CD4-positive, alpha-beta T cell (primary cell): ENCODE measurements at regions of chr12 and their contacts with region 1.

Region 1: DNA sequence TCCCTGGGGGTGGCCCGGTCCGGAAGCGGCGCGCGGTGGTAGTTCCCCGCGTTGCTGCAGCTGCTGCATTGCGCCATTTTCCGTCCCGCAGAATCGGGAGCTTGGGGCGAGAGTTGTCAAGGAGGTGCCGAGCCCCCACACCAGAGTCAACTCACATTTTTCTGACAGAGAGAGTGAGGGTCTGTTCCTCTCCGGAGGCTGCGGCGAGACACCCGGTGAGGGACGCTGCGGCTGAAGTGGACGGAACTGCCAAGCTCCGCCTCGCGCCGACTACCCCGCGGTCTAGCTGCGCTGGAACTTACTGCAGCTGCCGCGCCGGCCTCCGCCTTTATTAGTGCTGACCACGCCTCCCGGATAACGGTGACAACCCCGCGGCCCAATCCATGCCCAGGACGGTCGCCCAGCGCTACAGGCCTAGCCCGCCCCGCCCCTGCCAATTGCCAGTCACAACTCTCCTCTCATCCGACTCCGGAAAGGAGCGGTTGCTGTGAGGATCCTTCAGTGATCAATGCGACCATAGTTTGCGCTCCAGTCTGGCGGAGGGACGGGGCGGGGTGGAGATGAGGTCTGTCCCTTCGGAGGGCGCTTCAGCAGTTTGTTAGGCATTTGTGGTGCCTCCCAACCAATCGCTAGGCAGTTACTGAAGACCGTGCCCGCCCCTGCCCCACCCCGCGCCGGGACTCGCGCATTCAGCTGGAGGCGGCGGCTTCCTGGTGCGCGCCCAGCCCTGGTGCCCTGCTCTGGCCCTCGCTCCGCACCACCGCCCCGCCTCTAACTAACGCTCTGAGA is at the start of gene VAMP1:
- DNase-seq: peak; percentile 95 to 99 (median 97)
- ATAC-seq: peak; percentile 87
- H3K4me3 ChIP-seq: peak within 1 kb of the TSS; percentile 94
- H3K4me3 Mint-ChIP-seq: peak within 1 kb of the TSS; percentile 94
- H3K27ac ChIP-seq: peak within 1 kb of the TSS; percentile 72 to 73
- H3K27ac Mint-ChIP-seq: peak within 1 kb of the TSS; percentile 92
- H3K4me1 ChIP-seq: peaks cover 50% of the 10 kb centered on the region
- H3K4me1 Mint-ChIP-seq: peaks cover 63% of the 10 kb centered on the region
- H3K27me3 ChIP-seq: no peaks in the 10 kb centered on the region
- H3K27me3 Mint-ChIP-seq: no peaks in the 10 kb centered on the region
- CTCF ChIP-seq: no peak
- total RNA-seq, gene VAMP1: 84.8 to 87.7 TPM

Region 2: DNA sequence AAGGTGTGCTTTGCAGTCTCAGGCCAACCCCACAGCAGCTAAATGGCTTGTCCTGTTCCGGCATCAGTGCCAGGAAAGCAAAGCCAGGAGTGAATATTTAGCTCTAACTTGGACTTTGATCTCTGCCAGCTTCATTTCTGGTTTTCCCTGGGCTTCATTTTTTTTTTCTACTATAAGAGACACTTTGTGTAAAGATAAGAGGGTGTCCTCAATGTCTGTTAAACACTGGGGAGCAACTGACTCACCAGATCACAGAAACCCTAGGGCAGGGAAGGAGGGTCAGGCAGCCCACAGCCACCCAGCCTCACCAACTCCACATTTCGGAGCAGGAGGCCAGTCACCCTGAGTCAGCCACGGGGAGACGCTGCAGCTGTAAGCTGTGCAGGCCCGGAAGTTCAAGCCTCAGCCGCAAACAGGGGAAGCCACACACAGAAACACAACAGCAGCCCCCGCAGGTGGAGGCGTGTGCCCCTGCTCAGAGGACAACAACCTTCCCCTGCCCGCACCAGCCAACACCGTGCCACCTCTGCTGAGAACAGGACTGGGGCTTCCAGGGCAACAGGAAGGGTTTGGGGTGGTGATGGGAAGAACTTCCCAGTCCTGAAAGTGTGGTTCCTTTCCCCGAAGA is 135.0 kb before region 1 on chr12:
- CTCF ChIA-PET with region 1: interaction called, 19 read pairs
- POLR2A ChIA-PET with region 1: interaction called, 26 read pairs
- intact Hi-C with region 1: loop called (anchors 1 to 2 kb)
- DNase-seq: peak; percentile 68 to 92 (median 82)
- ATAC-seq: peak; percentile 77
- H3K4me3 ChIP-seq: peak overlapping the region; percentile 100
- H3K4me3 Mint-ChIP-seq: no peak overlapping the region
- H3K27ac ChIP-seq: peak overlapping the region; percentile 80 to 90
- H3K27ac Mint-ChIP-seq: no peak overlapping the region
- H3K4me1 ChIP-seq: peaks cover 86% of the 10 kb centered on the region
- H3K4me1 Mint-ChIP-seq: peaks cover 8% of the 10 kb centered on the region
- H3K27me3 ChIP-seq: no peaks in the 10 kb centered on the region
- H3K27me3 Mint-ChIP-seq: no peaks in the 10 kb centered on the region
- CTCF ChIP-seq: peak; percentile 76

Region 3: GRCh38 chr12:6430124-6430989 is 40.2 kb before region 1 on chr12:
- CTCF ChIA-PET with region 1: interaction called, 61 read pairs
- POLR2A ChIA-PET with region 1: interaction called, 99 read pairs
- intact Hi-C with region 1: no loop called
- DNase-seq: peak in 3 of 14 experiments; percentile 34 to 48 (median 43)
- ATAC-seq: no peak
- H3K4me3 ChIP-seq: peak overlapping the region; percentile 3
- H3K4me3 Mint-ChIP-seq: no peak overlapping the region
- H3K27ac ChIP-seq: no peak overlapping the region
- H3K27ac Mint-ChIP-seq: peak overlapping the region; percentile 56
- H3K4me1 ChIP-seq: peaks cover 62% of the 10 kb centered on the region
- H3K4me1 Mint-ChIP-seq: peaks cover 70% of the 10 kb centered on the region
- H3K27me3 ChIP-seq: no peaks in the 10 kb centered on the region
- H3K27me3 Mint-ChIP-seq: no peaks in the 10 kb centered on the region
- CTCF ChIP-seq: no peak

Region 4: GRCh38 chr12:6451348-6452244 is 19.0 kb before region 1 on chr12 and contains the start of gene TAPBPL:
- CTCF ChIA-PET with region 1: interaction called, 18 read pairs
- POLR2A ChIA-PET with region 1: interaction called, 225 read pairs
- intact Hi-C with region 1: loop called in 1 of 2 experiments (anchors 2 kb)
- DNase-seq: peak; percentile 61 to 95 (median 74)
- ATAC-seq: peak; percentile 92
- H3K4me3 ChIP-seq: peak within 1 kb of the TSS; percentile 97
- H3K4me3 Mint-ChIP-seq: peak within 1 kb of the TSS; percentile 94
- H3K27ac ChIP-seq: peak within 1 kb of the TSS; percentile 96 to 99
- H3K27ac Mint-ChIP-seq: peak within 1 kb of the TSS; percentile 98
- H3K4me1 ChIP-seq: peaks cover 71% of the 10 kb centered on the region
- H3K4me1 Mint-ChIP-seq: peaks cover 77% of the 10 kb centered on the region
- H3K27me3 ChIP-seq: no peaks in the 10 kb centered on the region
- H3K27me3 Mint-ChIP-seq: no peaks in the 10 kb centered on the region
- CTCF ChIP-seq: no peak
- total RNA-seq, gene TAPBPL: 14.7 to 15.8 TPM

Region 5: GRCh38 chr12:6533923-6534694 is 63.5 kb after region 1 on chr12 and contains the start of gene GAPDH:
- CTCF ChIA-PET with region 1: interaction called, 31 read pairs
- POLR2A ChIA-PET with region 1: interaction called, 58 read pairs
- intact Hi-C with region 1: loop called (anchors 1 to 2 kb)
- DNase-seq: peak in 12 of 14 experiments; percentile 69 to 93 (median 81)
- ATAC-seq: peak; percentile 6
- H3K4me3 ChIP-seq: peak within 1 kb of the TSS; percentile 88
- H3K4me3 Mint-ChIP-seq: peak within 1 kb of the TSS; percentile 96
- H3K27ac ChIP-seq: peak within 1 kb of the TSS; percentile 91 to 93
- H3K27ac Mint-ChIP-seq: peak within 1 kb of the TSS; percentile 90
- H3K4me1 ChIP-seq: peaks cover 64% of the 10 kb centered on the region
- H3K4me1 Mint-ChIP-seq: peaks cover 53% of the 10 kb centered on the region
- H3K27me3 ChIP-seq: no peaks in the 10 kb centered on the region
- H3K27me3 Mint-ChIP-seq: no peaks in the 10 kb centered on the region
- CTCF ChIP-seq: no peak
- total RNA-seq, gene GAPDH: 498 to 508 TPM

Region 6: GRCh38 chr12:6570264-6570887 is 99.8 kb after region 1 on chr12:
- CTCF ChIA-PET with region 1: interaction called, 3 read pairs
- POLR2A ChIA-PET with region 1: interaction called, 15 read pairs
- intact Hi-C with region 1: no loop called
- DNase-seq: peak in 9 of 14 experiments; percentile 23 to 71 (median 44)
- ATAC-seq: no peak
- H3K4me3 ChIP-seq: no peak overlapping the region
- H3K4me3 Mint-ChIP-seq: peak overlapping the region; percentile 100
- H3K27ac ChIP-seq: no peak overlapping the region
- H3K27ac Mint-ChIP-seq: peak overlapping the region; percentile 98
- H3K4me1 ChIP-seq: peaks cover 41% of the 10 kb centered on the region
- H3K4me1 Mint-ChIP-seq: peaks cover 45% of the 10 kb centered on the region
- H3K27me3 ChIP-seq: no peaks in the 10 kb centered on the region
- H3K27me3 Mint-ChIP-seq: no peaks in the 10 kb centered on the region
- CTCF ChIP-seq: peak; percentile 42

Region 7: DNA sequence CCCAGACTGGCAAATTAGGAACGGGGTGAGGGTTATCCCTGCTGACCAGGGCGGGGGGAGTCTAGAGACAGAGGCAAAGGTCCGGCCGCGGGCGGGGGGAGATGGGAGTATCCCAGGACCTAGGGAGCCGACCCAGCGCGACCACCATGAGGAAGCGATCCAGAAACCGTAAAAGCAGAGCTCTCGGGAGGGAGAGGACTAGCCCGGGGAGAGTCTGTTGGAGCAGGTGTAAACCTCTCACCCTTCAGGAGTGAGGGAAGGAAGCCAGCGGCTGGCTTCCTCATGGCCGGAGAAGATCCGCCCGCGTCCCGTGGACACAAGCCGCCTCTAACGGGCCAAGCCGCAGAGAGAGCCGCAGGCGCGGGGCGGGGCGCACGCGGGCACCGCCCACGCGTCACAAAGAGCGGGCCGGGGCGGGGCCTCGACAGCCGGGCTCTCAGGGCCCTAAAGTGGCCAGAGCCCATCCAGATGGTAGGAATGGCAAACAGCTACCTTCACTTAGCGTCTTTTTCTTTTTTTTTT is 176.6 kb after region 1 on chr12 and contains the start of gene ACRBP:
- CTCF ChIA-PET with region 1: no interaction called
- POLR2A ChIA-PET with region 1: no interaction called
- intact Hi-C with region 1: no loop called
- DNase-seq: peak in 7 of 14 experiments; percentile 15 to 69 (median 38)
- ATAC-seq: peak; percentile 84
- H3K4me3 ChIP-seq: peak within 1 kb of the TSS; percentile 46
- H3K4me3 Mint-ChIP-seq: peak within 1 kb of the TSS; percentile 69
- H3K27ac ChIP-seq: no peak within 1 kb of the TSS
- H3K27ac Mint-ChIP-seq: peak within 1 kb of the TSS; percentile 49
- H3K4me1 ChIP-seq: peaks cover 12% of the 10 kb centered on the region
- H3K4me1 Mint-ChIP-seq: peaks cover 15% of the 10 kb centered on the region
- H3K27me3 ChIP-seq: no peaks in the 10 kb centered on the region
- H3K27me3 Mint-ChIP-seq: no peaks in the 10 kb centered on the region
- CTCF ChIP-seq: no peak
- total RNA-seq, gene ACRBP: 0.58 to 0.95 TPM

Region 8: GRCh38 chr12:8127138-8127537 is 1656.6 kb after region 1 on chr12:
- CTCF ChIA-PET with region 1: no interaction called
- POLR2A ChIA-PET with region 1: no interaction called
- intact Hi-C with region 1: no loop called
- DNase-seq: peak in 6 of 14 experiments; percentile 7 to 61 (median 36)
- ATAC-seq: peak; percentile 97
- H3K4me3 ChIP-seq: no peak overlapping the region
- H3K4me3 Mint-ChIP-seq: peak overlapping the region; percentile 3
- H3K27ac ChIP-seq: no peak overlapping the region
- H3K27ac Mint-ChIP-seq: peak overlapping the region; percentile 45
- H3K4me1 ChIP-seq: peaks cover 5% of the 10 kb centered on the region
- H3K4me1 Mint-ChIP-seq: peaks cover 33% of the 10 kb centered on the region
- H3K27me3 ChIP-seq: no peaks in the 10 kb centered on the region
- H3K27me3 Mint-ChIP-seq: no peaks in the 10 kb centered on the region
- CTCF ChIP-seq: no peak